CD4-positive, alpha-beta T cell (primary cell): ENCODE measurements at regions of chr16 and their contacts with region 1.

Region 1: GRCh38 chr16:57519796-57520360 is 16.5 kb downstream of the CCDC102A start:
- DNase-seq: peak; percentile 67 to 89 (median 78)
- ATAC-seq: peak; percentile 99
- H3K4me3 ChIP-seq: no peak overlapping the region
- H3K4me3 Mint-ChIP-seq: no peak overlapping the region
- H3K27ac ChIP-seq: no peak overlapping the region
- H3K27ac Mint-ChIP-seq: no peak overlapping the region
- H3K4me1 ChIP-seq: peaks cover 7% of the 10 kb centered on the region
- H3K4me1 Mint-ChIP-seq: peaks cover 5% of the 10 kb centered on the region
- H3K27me3 ChIP-seq: no peaks in the 10 kb centered on the region
- H3K27me3 Mint-ChIP-seq: no peaks in the 10 kb centered on the region
- CTCF ChIP-seq: peak; percentile 98

Region 2: DNA sequence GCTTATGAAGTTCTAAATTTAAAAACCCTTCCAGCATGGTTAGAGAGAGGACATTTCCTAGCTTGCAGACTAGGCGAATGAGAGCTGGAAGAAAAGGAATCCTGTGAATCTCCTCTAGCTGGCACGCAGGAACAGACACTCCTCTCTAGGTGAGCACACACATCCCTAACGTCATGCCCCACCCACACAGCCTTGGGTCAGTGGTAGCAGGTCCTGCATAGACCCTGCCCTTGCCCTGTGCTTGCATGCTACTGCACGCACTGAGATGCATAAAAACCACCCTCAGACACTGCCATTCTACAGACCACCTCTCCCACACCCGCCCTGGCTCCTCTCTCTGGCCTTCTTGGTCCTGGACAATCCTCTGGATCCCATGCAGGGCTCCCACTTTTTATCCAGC is 1710.5 kb before region 1 on chr16:
- CTCF ChIA-PET with region 1: no interaction called
- POLR2A ChIA-PET with region 1: no interaction called
- intact Hi-C with region 1: no loop called
- DNase-seq: no peak
- ATAC-seq: no peak
- H3K4me3 ChIP-seq: no peak overlapping the region
- H3K4me3 Mint-ChIP-seq: no peak overlapping the region
- H3K27ac ChIP-seq: no peak overlapping the region
- H3K27ac Mint-ChIP-seq: no peak overlapping the region
- H3K4me1 ChIP-seq: no peaks in the 10 kb centered on the region
- H3K4me1 Mint-ChIP-seq: no peaks in the 10 kb centered on the region
- H3K27me3 ChIP-seq: peaks cover 0 to 18% of the 10 kb centered on the region in 2 experiments
- H3K27me3 Mint-ChIP-seq: peaks cover 24% of the 10 kb centered on the region
- CTCF ChIP-seq: no peak

Region 3: DNA sequence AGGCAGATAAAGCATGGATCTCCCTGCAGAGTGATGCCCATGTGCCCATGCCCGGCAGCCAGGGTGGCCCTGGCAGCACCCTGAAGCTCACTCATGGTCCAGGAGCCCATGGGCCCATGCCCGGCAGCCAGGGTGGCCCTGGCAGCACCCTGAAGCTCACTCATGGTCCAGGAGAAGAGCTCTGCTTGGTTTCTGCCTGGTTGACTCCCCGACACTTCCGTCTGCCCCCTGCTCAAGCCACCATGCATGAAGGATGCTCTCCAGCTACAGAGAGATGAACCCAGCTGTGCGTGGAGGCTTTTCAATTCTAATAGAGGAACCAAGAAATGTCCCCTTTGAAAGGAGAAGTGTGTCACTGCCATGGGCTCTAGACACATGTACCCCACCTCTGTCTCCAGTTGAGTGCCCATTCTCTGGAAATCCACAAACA is 106.6 kb before region 1 on chr16:
- CTCF ChIA-PET with region 1: interaction called, 14 read pairs
- POLR2A ChIA-PET with region 1: interaction called, 3 read pairs
- intact Hi-C with region 1: no loop called
- DNase-seq: no peak
- ATAC-seq: no peak
- H3K4me3 ChIP-seq: no peak overlapping the region
- H3K4me3 Mint-ChIP-seq: no peak overlapping the region
- H3K27ac ChIP-seq: no peak overlapping the region
- H3K27ac Mint-ChIP-seq: no peak overlapping the region
- H3K4me1 ChIP-seq: peaks cover 16% of the 10 kb centered on the region
- H3K4me1 Mint-ChIP-seq: peaks cover 7% of the 10 kb centered on the region
- H3K27me3 ChIP-seq: no peaks in the 10 kb centered on the region
- H3K27me3 Mint-ChIP-seq: no peaks in the 10 kb centered on the region
- CTCF ChIP-seq: no peak

Region 4: DNA sequence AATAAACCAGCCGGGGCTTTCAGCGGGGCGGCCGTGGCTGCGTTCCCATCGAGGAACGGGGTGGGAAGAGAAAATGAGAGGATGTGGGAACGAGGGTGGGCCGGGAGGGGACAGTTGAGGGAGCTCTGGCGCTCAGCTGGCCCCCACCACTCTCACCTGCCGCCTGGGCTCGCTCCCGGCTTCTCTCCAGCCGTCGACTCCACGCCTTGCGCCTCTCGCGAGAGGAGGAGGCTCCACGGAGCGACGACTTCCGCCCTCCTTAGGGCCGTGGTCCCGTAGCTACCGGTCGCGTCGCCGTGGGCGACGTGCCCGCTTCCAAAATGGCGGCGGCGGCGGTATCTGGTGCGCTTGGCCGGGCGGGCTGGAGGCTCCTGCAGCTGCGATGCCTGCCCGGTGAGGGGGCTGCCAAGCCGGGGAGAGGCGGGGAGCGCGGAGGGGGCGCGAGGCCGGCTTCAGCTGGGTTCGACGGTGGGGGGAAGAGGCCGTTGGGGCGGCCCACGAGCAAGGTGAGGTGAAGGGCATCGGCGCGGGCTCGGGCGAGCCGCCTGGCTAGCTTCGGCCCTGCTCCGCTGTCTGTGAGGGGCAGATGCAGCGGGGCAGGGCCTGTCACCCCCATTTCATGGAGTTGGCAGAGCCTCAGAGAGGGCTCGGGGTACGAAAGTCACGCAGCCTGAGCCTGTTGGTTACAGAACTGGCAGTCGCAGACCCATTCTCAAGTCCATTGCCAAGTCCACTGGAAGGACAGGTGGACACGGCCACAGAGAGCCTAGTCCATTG is 72.5 kb before region 1 on chr16 and contains the starts of genes CIAPIN1 and COQ9:
- CTCF ChIA-PET with region 1: interaction called, 10 read pairs
- POLR2A ChIA-PET with region 1: interaction called, 4 read pairs
- intact Hi-C with region 1: no loop called
- DNase-seq: peak; percentile 83 to 97 (median 92)
- ATAC-seq: peak; percentile 99
- H3K4me3 ChIP-seq: peak within 1 kb of the TSS; percentile 96
- H3K4me3 Mint-ChIP-seq: peak within 1 kb of the TSS; percentile 96
- H3K27ac ChIP-seq: peak within 1 kb of the TSS; percentile 73 to 79
- H3K27ac Mint-ChIP-seq: peak within 1 kb of the TSS; percentile 88
- H3K4me1 ChIP-seq: peaks cover 29% of the 10 kb centered on the region
- H3K4me1 Mint-ChIP-seq: peaks cover 34% of the 10 kb centered on the region
- H3K27me3 ChIP-seq: no peaks in the 10 kb centered on the region
- H3K27me3 Mint-ChIP-seq: no peaks in the 10 kb centered on the region
- CTCF ChIP-seq: no peak
- total RNA-seq, gene CIAPIN1: 27.8 to 28.0 TPM
- total RNA-seq, gene COQ9: 7.0 to 7.6 TPM

Region 5: DNA sequence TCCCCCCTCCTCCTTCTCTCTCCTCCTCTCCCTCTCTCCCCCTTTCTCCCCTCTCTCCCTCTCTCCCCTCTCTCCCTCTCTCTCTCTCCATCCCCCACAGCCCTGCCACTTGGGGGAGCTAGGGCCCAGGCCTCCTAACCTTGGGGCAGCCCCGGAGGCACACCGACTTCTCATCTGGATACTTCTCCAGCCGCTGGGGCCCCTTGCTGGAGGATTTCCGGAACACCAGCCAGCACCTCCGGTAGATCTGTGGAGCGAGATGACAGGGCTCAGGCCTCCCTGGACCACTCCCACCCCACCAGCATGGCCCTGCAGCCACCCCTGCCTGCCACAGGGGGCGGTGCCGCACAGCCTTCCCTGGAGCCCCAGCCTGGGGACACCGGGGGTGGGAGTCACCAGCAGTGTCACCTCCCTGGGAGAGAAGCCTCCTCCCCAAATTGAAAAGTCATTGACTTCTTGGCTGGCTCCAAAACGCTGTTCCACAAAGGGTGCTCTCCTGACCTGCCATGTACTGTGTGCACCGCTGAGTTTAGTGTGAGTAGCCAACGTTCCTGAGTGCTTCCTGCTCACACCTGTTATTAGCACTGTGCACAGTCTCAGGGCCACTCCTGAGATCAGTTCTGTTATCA is 44.1 kb before region 1 on chr16:
- CTCF ChIA-PET with region 1: interaction called, 9 read pairs
- POLR2A ChIA-PET with region 1: no interaction called
- intact Hi-C with region 1: loop called (anchors 1 to 2 kb)
- DNase-seq: peak; percentile 31 to 88 (median 68)
- ATAC-seq: peak; percentile 97
- H3K4me3 ChIP-seq: no peak overlapping the region
- H3K4me3 Mint-ChIP-seq: peak overlapping the region; percentile 7
- H3K27ac ChIP-seq: no peak overlapping the region
- H3K27ac Mint-ChIP-seq: peak overlapping the region; percentile 51
- H3K4me1 ChIP-seq: peaks cover 21% of the 10 kb centered on the region
- H3K4me1 Mint-ChIP-seq: peaks cover 11% of the 10 kb centered on the region
- H3K27me3 ChIP-seq: no peaks in the 10 kb centered on the region
- H3K27me3 Mint-ChIP-seq: no peaks in the 10 kb centered on the region
- CTCF ChIP-seq: peak; percentile 76

Region 6: GRCh38 chr16:57530104-57530521 is 10.2 kb after region 1 on chr16:
- CTCF ChIA-PET with region 1: interaction called, 20 read pairs
- POLR2A ChIA-PET with region 1: interaction called, 3 read pairs
- intact Hi-C with region 1: no loop called
- DNase-seq: peak; percentile 21 to 88 (median 70)
- ATAC-seq: peak; percentile 89
- H3K4me3 ChIP-seq: peak overlapping the region; percentile 23
- H3K4me3 Mint-ChIP-seq: peak overlapping the region; percentile 83
- H3K27ac ChIP-seq: peak overlapping the region; percentile 75 to 85
- H3K27ac Mint-ChIP-seq: peak overlapping the region; percentile 96
- H3K4me1 ChIP-seq: peaks cover 64% of the 10 kb centered on the region
- H3K4me1 Mint-ChIP-seq: peaks cover 59% of the 10 kb centered on the region
- H3K27me3 ChIP-seq: no peaks in the 10 kb centered on the region
- H3K27me3 Mint-ChIP-seq: no peaks in the 10 kb centered on the region
- CTCF ChIP-seq: no peak

Region 7: DNA sequence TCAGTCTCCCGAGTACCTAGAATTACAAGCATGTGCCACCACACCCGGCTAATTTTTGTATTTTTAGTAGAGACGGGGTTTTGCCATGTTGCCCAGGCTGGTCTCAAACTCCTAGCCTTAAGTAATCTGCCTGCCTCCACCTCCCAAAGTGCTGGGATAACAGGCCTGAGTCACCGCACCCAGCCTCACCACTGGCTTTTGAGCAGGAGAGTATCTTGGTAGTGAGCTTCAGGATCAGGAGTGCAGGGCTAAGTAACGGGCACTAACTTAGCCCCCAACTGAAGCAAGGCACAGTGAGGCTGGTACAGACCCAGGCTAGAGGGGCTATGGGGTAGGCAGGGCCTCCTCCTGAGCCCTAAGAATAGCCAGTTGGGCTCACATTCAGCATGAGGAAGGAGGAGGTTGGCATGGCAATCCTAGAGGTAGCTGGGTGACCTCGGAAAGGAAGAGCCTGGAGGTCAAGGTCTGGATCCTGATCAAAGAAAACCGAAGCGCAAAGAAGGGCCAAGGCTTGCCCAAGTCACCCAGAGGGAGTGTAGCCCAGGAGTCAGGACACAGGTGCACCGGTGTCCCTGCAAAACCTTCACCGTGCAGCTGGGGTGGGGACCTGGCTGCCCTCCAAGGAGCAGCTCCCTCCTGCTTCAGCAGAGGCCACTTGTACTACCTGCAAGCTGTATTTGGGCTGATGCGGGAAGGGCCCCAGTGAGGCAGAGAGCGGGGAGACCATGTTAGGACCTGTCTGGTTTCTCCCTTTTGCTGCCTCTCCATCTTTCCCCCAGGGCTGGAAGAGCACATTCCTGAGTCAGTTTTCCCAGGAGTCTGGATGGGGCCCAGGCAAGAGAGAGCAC is 21.3 kb after region 1 on chr16:
- CTCF ChIA-PET with region 1: interaction called, 26 read pairs
- POLR2A ChIA-PET with region 1: interaction called, 6 read pairs
- intact Hi-C with region 1: loop called in 1 of 2 experiments (anchors 2 kb)
- DNase-seq: no peak
- ATAC-seq: no peak
- H3K4me3 ChIP-seq: no peak overlapping the region
- H3K4me3 Mint-ChIP-seq: no peak overlapping the region
- H3K27ac ChIP-seq: no peak overlapping the region
- H3K27ac Mint-ChIP-seq: no peak overlapping the region
- H3K4me1 ChIP-seq: peaks cover 69% of the 10 kb centered on the region
- H3K4me1 Mint-ChIP-seq: peaks cover 57% of the 10 kb centered on the region
- H3K27me3 ChIP-seq: no peaks in the 10 kb centered on the region
- H3K27me3 Mint-ChIP-seq: no peaks in the 10 kb centered on the region
- CTCF ChIP-seq: no peak